ENCODE measurements at regions of chr11 and their contacts with region 1.

Region 1: DNA sequence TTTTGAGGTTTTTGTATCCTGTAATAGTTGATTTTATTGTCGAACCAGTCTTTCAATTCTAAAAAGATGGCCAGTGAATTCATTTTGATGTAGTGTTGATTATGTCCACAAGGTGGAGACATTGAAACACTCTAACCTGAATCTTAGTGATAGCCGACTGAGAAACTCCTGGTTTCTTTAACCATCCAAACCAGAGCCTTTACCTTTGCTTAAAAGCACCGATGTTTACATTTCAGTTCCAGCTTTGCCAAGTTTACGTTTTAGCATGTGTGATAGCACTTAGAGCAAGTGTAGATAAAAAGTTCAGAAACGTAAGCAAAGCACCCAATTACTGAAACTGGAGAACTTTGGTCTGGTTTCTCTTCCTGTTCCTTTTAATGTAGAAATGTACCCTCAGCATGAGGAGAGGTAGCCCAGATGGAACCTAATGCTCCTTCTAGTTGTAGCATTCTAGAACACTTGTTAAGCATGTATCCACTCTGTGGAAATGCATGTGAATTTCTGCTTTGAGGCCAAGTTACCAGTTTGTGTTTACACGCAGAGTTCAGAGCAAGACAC is 208.6 kb downstream of the DBX1 start:
- DNase-seq: no peak
- H3K4me3 ChIP-seq: peak overlapping the region in 32 of 59 donors; percentile 1 to 47 (median 26)
- H3K27ac ChIP-seq: peak overlapping the region in 39 of 59 donors; percentile 1 to 80 (median 41)
- H3K27me3 ChIP-seq: no peaks in the 10 kb centered on the region
- CTCF ChIP-seq: peak; percentile 56 to 86 (median 76)

Region 2: DNA sequence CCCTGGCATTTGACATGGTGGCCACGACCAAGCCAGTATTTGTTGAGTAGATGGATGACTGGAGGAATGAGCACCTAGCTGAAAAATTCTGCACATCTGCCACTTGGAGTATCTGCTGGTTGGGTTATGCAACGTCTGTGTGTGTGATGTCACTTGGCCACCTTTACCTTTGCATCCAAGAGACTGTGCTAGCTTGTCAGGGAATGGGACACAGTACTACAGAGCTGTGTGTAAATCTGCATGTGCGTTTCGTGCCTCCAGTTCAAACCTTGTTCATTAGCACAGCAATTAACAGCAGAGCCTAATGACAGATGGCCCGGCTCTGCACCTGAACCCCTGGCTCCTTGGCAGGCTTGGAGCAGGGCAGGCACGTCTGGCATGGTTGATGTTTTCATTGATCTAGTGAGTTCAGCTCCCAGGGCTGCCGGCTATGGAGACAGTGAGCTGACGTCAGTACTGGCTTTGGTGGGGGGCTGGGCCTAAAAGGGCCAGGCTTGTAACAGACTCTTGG is 427.4 kb before region 1 on chr11:
- intact Hi-C with region 1: no loop called
- DNase-seq: peak in 9 of 10 donors; percentile 5 to 76 (median 69)
- H3K4me3 ChIP-seq: peak overlapping the region in 31 of 59 donors; percentile 4 to 55 (median 26)
- H3K27ac ChIP-seq: peak overlapping the region in 42 of 59 donors; percentile 0 to 82 (median 64)
- H3K27me3 ChIP-seq: no peaks in the 10 kb centered on the region
- CTCF ChIP-seq: no peak

Region 3: GRCh38 chr11:19628018-19628417 is 323.6 kb before region 1 on chr11:
- intact Hi-C with region 1: no loop called
- DNase-seq: no peak
- H3K4me3 ChIP-seq: no peak overlapping the region
- H3K27ac ChIP-seq: no peak overlapping the region
- H3K27me3 ChIP-seq: no peaks in the 10 kb centered on the region
- CTCF ChIP-seq: no peak

Region 4: GRCh38 chr11:19789835-19790710 is 161.6 kb before region 1 on chr11:
- intact Hi-C with region 1: no loop called
- DNase-seq: no peak
- H3K4me3 ChIP-seq: no peak overlapping the region
- H3K27ac ChIP-seq: no peak overlapping the region
- H3K27me3 ChIP-seq: no peaks in the 10 kb centered on the region
- CTCF ChIP-seq: no peak

Region 5: GRCh38 chr11:19800162-19800561 is 151.5 kb before region 1 on chr11:
- intact Hi-C with region 1: no loop called
- DNase-seq: peak in 2 of 10 donors; percentile 43 to 53
- H3K4me3 ChIP-seq: no peak overlapping the region
- H3K27ac ChIP-seq: no peak overlapping the region
- H3K27me3 ChIP-seq: no peaks in the 10 kb centered on the region
- CTCF ChIP-seq: peak in 37 of 56 donors; percentile 7 to 56 (median 31)

Region 6: GRCh38 chr11:20110908-20111669 is 159.5 kb after region 1 on chr11:
- intact Hi-C with region 1: loop called (anchors 5 kb)
- DNase-seq: peak in 3 of 10 donors; percentile 35 to 47 (median 44)
- H3K4me3 ChIP-seq: no peak overlapping the region
- H3K27ac ChIP-seq: peak overlapping the region in 43 of 59 donors; percentile 1 to 87 (median 76)
- H3K27me3 ChIP-seq: no peaks in the 10 kb centered on the region
- CTCF ChIP-seq: peak; percentile 60 to 88 (median 82)

Region 7: DNA sequence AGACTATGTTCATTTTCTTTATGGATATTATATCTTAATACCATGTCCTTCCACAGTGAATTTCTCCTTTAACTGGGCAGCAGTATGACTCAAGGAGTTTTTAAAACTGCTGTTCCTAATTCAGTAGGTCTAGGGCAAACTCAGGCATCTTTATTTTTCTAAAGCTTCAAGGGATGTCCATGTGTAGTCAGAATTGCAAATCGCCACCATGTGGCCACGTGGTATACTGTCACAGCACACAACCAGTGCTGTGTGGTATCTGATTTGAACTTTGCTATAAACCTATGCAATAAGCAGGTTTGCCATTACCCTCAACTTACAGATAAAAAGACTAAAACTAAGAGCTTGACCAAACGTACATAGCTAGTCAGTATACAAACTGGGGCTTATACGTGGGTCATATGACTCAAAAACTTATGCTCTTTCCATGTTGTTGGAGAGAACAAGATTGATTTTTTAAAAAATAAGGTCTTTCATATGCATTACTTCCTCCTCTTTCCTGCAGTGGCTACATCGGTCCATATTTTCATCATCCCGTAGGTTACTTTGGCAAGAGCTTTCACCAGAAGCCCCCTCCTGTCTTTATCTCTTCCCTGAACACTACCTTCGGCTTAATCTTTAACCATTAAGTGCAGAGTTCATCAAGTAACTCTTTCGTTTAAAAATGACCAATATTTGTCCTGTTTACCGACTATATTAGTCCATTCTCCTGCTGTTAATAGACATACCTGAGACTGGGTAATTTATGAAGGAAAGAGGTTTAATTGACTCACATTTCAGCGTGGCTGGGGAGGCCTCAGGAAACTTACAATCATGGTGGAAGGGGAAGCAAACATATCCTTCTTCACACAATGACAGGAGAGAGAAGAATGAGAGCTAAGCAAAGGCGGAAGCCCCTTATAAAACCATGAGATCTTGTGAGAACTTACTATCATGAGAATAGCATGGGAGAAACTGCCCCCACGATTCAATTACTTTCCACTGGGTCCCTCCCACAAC is 403.9 kb after region 1 on chr11:
- intact Hi-C with region 1: loop called in 1 of 2 experiments (anchors 10 kb)
- DNase-seq: peak in 7 of 10 donors; percentile 32 to 59 (median 57)
- H3K4me3 ChIP-seq: no peak overlapping the region
- H3K27ac ChIP-seq: no peak overlapping the region
- H3K27me3 ChIP-seq: no peaks in the 10 kb centered on the region
- CTCF ChIP-seq: peak in 54 of 56 donors; percentile 33 to 80 (median 66)

Measured in dorsolateral prefrontal cortex (tissue), 120 donors.